Activated CD8-positive, alpha-beta T cell treated with anti-CD3 and anti-CD28 coated beads, Interleukin-2, amount 10 ng/mL, durations not matched to agents 7 days and 5 days (primary cell): ENCODE measurements at regions of chr1 and their contacts with region 1.

Region 1: DNA sequence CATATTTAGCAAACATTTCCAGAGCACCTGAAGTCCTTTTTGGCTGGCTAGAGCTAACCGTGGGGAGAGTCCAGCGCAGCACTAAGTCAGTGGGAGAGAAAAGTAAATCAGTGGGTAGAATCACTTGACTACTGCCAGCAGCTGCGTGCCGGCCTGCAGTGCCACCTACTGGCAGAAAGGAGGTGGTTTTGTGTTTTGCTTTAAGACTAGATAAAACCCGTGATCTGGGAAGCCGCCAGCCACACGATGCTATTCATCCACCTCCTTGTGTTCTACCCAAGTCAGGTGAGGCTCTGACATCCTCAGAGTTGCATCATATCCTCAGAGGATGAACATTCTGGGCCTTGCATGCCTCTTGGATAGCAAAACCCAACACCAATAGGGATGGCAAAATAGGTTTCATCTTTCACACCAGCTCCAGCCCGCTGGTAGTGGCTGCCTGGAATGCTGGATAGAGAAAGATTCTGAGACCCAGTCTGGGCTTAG is 14.1 kb upstream of the HEYL start:
- DNase-seq: peak; percentile 84
- ATAC-seq: peak; percentile 77
- H3K4me3 Mint-ChIP-seq: no peak overlapping the region
- H3K27ac Mint-ChIP-seq: no peak overlapping the region
- H3K4me1 Mint-ChIP-seq: peaks cover 15% of the 10 kb centered on the region
- H3K27me3 Mint-ChIP-seq: peaks cover 8% of the 10 kb centered on the region

Region 2: GRCh38 chr1:39509360-39510009 is 144.1 kb before region 1 on chr1:
- CTCF ChIA-PET with region 1: no interaction called
- POLR2A ChIA-PET with region 1: no interaction called
- DNase-seq: peak; percentile 48
- ATAC-seq: peak; percentile 53
- H3K4me3 Mint-ChIP-seq: peak overlapping the region; percentile 7
- H3K27ac Mint-ChIP-seq: peak overlapping the region; percentile 63
- H3K4me1 Mint-ChIP-seq: peaks cover 19% of the 10 kb centered on the region
- H3K27me3 Mint-ChIP-seq: peaks cover 12% of the 10 kb centered on the region

Region 3: DNA sequence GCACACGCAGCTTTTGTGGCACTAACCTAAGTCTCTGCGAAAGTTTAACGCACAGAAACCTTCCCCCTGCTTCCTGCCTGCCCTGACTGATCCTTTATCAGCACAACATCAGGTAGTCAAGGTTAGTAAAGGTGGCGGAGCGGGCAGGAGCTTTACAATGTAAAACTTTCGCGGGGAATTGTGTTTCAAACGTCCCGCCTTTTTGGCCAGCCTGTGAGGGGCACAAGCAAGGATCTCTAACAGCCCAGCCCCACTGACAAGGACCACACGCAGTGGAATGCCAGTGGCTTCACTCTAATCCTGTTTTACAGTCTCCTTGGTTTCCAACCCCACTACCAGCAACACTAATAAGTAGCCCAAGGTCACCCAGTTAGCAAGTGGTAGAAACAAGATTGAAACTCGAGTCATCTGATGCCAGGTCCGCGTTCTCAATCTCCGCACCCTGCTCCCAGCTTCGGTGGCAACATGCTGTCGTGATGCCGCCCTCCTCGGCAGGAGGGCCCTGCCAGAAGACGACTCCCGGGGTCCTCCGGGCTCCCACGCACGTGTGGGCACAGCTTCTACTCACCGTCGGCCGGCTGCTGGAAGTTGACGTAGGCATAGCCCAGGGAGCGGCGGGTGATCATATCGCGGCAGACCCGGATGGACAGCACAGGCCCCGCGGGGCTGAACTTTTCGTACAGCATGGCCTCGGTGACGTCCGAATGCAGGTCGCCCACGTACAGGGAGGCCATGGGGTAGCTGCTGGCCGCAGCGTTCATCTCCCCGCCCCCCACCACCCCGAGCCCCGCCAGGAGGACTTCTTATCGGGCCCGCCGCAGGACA is 78.2 kb before region 1 on chr1:
- CTCF ChIA-PET with region 1: interaction called, 12 read pairs
- POLR2A ChIA-PET with region 1: no interaction called
- DNase-seq: peak; percentile 63
- ATAC-seq: peak; percentile 36
- H3K4me3 Mint-ChIP-seq: peak overlapping the region; percentile 92
- H3K27ac Mint-ChIP-seq: peak overlapping the region; percentile 89
- H3K4me1 Mint-ChIP-seq: peaks cover 45% of the 10 kb centered on the region
- H3K27me3 Mint-ChIP-seq: no peaks in the 10 kb centered on the region

Region 4: DNA sequence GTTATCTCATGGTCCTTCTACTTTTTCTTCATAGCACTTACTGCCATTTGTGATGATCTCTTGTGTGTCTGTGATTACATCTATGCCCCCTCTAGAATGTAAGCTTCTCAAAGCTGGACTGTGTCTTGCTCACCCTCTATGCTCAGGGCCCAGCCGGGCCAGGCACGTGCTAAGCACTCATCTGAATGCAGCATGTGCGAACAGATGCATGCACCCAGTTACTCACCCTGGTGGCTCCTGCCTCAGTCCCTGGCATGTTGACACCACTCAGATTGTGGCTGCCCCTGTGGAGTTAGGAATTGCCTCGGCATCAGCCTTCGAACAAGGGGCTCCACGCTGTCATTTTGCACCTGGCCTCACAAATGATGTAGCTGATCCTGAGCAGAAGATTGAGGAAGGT is 57.4 kb before region 1 on chr1:
- CTCF ChIA-PET with region 1: interaction called, 12 read pairs
- POLR2A ChIA-PET with region 1: no interaction called
- DNase-seq: no peak
- ATAC-seq: no peak
- H3K4me3 Mint-ChIP-seq: no peak overlapping the region
- H3K27ac Mint-ChIP-seq: no peak overlapping the region
- H3K4me1 Mint-ChIP-seq: no peaks in the 10 kb centered on the region
- H3K27me3 Mint-ChIP-seq: peaks cover 16% of the 10 kb centered on the region

Region 5: GRCh38 chr1:39632682-39633417 is 20.7 kb before region 1 on chr1:
- CTCF ChIA-PET with region 1: interaction called, 20 read pairs
- POLR2A ChIA-PET with region 1: no interaction called
- DNase-seq: no peak
- ATAC-seq: no peak
- H3K4me3 Mint-ChIP-seq: no peak overlapping the region
- H3K27ac Mint-ChIP-seq: no peak overlapping the region
- H3K4me1 Mint-ChIP-seq: peaks cover 2% of the 10 kb centered on the region
- H3K27me3 Mint-ChIP-seq: peaks cover 19% of the 10 kb centered on the region

Region 6: DNA sequence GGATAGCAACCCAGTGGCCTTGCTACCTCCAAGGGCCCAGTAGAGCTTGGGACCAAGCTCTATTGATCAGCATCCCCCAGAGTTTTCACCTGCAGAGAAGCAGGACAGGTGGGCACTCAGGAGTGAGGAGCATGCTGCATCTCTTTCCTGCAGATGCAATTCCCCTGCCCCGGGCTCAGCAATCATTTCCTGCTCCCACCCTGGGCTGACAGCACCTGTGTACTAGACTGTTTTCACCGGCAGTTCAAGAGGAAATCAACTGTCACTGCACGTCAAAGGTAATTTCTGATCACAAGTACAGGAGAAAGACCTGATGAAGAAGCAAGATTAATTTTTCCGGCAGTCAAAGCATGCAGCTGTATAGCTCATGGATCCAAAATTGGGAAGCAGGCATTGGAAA is 27.2 kb after region 1 on chr1:
- CTCF ChIA-PET with region 1: interaction called, 230 read pairs
- POLR2A ChIA-PET with region 1: no interaction called
- DNase-seq: no peak
- ATAC-seq: no peak
- H3K4me3 Mint-ChIP-seq: no peak overlapping the region
- H3K27ac Mint-ChIP-seq: no peak overlapping the region
- H3K4me1 Mint-ChIP-seq: peaks cover 12% of the 10 kb centered on the region
- H3K27me3 Mint-ChIP-seq: peaks cover 16% of the 10 kb centered on the region

Region 7: DNA sequence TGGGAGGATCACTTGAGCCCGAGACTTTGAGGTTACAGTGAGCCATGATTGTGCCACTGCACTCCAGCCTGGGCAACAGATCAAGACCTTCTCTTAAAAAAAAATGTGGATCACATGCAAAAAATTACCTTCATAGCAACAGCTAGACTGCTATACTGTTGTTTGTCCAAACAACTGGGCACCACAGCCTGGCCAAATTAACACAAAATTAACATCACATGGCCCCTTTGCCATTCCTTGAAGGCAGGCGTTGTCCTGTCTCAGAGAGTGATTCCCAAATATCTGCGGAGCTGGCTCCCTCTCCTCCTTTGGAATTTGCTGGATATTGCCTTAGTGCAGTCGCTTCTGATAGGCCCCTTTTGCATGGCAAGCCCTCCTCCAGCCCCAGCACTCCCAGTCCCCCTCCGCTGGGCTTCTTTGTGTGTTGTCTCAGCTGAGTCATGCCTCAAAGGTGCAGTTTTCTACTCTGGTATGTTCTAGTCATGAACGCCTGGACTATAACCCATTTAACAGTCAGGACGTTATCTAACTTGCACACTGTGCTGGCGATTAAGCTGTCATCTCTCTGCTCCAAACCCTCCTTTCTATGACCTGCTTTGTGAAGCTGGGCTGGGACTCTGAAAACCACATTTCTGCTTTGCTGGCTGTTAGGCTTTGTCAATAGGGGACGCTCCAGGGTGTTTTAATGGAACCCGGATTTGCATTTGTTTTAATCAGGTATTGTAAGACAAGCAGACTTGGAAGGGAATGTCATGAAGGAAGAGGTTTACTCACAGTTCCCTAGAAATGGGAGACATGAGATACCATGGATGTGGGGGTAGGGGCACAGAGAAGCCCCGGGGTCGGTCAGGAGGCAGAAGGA is 57.7 kb after region 1 on chr1:
- CTCF ChIA-PET with region 1: interaction called, 11 read pairs
- POLR2A ChIA-PET with region 1: no interaction called
- DNase-seq: no peak
- ATAC-seq: no peak
- H3K4me3 Mint-ChIP-seq: no peak overlapping the region
- H3K27ac Mint-ChIP-seq: no peak overlapping the region
- H3K4me1 Mint-ChIP-seq: no peaks in the 10 kb centered on the region
- H3K27me3 Mint-ChIP-seq: peaks cover 26% of the 10 kb centered on the region

Region 8: GRCh38 chr1:39738622-39739366 is 85.2 kb after region 1 on chr1 and contains the start of gene PPIE:
- CTCF ChIA-PET with region 1: interaction called, 12 read pairs
- POLR2A ChIA-PET with region 1: interaction called, 3 read pairs
- DNase-seq: peak; percentile 97
- ATAC-seq: peak; percentile 97
- H3K4me3 Mint-ChIP-seq: peak within 1 kb of the TSS; percentile 92
- H3K27ac Mint-ChIP-seq: peak within 1 kb of the TSS; percentile 97
- H3K4me1 Mint-ChIP-seq: peaks cover 46% of the 10 kb centered on the region
- H3K27me3 Mint-ChIP-seq: peaks cover 10% of the 10 kb centered on the region
- total RNA-seq, gene PPIE: 60.9 to 64.7 TPM